CD4-positive, alpha-beta T cell (primary cell): ENCODE measurements at regions of chr12 and their contacts with region 1.

Region 1: DNA sequence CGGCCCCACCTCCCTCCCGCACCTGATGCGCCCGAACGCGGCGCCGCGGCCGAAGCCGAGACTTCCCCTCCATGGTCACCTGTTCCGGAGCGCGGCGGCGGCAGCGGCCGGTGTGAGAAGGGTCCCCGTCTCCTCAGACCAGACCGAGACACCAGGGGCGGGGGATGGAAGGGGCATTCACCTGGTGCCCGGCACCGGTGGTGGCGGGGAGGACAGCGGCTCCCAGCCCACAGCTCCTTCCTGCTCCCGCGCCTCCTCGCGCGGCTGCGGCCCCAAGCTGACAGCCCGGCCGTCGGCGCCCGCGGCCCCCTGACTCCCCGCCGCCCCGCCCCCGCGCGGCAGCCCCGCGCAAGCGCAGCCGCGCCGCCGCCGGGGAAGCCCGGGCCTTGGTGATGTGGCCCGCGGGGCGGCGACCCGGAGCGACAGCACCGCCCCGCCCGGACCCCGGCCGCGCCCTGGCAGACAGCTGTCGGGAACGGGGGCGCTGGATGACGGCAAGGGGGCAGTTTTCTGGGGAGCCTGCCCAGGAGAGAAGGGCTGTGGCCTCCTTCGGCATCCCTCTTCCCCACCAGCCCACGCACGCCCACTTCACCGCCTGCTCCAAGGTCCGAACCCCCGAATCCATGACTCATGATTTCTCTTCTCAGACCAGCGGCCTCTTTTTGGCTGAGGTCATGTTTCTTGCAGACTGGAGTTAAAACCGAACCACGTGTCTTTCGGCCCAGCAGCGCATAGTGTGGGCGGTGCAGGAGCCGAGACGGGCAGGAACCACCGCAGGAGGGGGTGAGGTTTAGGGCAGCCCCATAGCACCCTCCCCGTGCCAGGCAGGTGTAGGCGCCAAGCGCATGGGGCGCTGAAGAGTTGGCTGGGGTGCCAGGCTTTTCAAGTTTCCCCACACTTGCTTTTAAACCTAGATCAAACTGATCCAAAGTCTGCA is at the start of gene SLC41A2:
- DNase-seq: peak; percentile 53 to 93 (median 72)
- ATAC-seq: peak; percentile 95
- H3K4me3 ChIP-seq: peak within 1 kb of the TSS; percentile 63
- H3K4me3 Mint-ChIP-seq: peak within 1 kb of the TSS; percentile 99
- H3K27ac ChIP-seq: no peak within 1 kb of the TSS
- H3K27ac Mint-ChIP-seq: peak within 1 kb of the TSS; percentile 93
- H3K4me1 ChIP-seq: peaks cover 15% of the 10 kb centered on the region
- H3K4me1 Mint-ChIP-seq: peaks cover 26% of the 10 kb centered on the region
- H3K27me3 ChIP-seq: no peaks in the 10 kb centered on the region
- H3K27me3 Mint-ChIP-seq: peaks cover 7% of the 10 kb centered on the region
- CTCF ChIP-seq: peak; percentile 19
- total RNA-seq, gene SLC41A2: 1.2 to 1.7 TPM

Region 2: DNA sequence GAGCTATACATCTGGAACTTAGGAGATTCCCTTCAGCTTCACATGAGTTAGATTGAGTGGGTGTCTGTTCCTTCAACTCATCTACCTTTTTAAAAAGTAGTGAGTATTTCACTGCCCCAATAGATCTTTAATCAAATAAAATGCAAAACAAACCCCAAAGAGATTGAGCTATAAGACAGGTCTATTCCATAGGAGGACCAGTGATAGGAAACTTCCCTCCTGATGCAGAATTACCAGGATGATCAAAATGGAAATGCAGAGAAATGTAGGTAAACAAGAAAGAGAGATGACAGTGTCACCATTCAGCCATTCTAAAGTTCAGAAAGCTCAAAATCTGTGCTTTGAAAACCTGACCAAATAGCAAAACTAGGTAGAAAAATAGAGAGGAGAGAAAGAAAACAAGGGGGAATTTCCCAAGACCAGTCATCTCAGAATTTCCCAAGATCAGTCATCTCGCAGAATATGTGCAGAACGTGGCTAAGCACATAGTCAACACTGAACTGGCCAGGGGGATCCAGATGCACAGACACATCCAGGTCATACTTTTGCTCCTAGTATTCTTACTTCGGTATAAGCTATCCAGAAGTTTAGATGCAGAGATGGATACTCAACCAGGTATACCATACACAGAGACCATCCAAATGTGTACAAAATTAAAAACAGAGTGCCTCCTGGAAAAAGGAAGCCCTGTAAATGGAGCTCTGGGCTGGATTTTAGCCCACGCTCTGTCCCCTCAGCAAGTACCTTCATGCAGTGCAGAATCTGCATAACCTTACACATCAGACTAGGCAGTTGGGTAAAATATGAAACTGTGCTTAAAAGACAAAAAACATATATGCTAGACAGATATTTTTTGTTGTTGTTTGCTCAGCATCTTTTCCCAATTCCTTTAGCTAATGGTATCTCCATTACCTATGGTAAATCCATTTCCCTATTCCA is 27.6 kb before region 1 on chr12:
- CTCF ChIA-PET with region 1: no interaction called
- POLR2A ChIA-PET with region 1: no interaction called
- intact Hi-C with region 1: no loop called
- DNase-seq: peak in 2 of 14 experiments; percentile 27 to 36
- ATAC-seq: no peak
- H3K4me3 ChIP-seq: no peak overlapping the region
- H3K4me3 Mint-ChIP-seq: no peak overlapping the region
- H3K27ac ChIP-seq: no peak overlapping the region
- H3K27ac Mint-ChIP-seq: no peak overlapping the region
- H3K4me1 ChIP-seq: no peaks in the 10 kb centered on the region
- H3K4me1 Mint-ChIP-seq: no peaks in the 10 kb centered on the region
- H3K27me3 ChIP-seq: no peaks in the 10 kb centered on the region
- H3K27me3 Mint-ChIP-seq: no peaks in the 10 kb centered on the region
- CTCF ChIP-seq: no peak

Region 3: DNA sequence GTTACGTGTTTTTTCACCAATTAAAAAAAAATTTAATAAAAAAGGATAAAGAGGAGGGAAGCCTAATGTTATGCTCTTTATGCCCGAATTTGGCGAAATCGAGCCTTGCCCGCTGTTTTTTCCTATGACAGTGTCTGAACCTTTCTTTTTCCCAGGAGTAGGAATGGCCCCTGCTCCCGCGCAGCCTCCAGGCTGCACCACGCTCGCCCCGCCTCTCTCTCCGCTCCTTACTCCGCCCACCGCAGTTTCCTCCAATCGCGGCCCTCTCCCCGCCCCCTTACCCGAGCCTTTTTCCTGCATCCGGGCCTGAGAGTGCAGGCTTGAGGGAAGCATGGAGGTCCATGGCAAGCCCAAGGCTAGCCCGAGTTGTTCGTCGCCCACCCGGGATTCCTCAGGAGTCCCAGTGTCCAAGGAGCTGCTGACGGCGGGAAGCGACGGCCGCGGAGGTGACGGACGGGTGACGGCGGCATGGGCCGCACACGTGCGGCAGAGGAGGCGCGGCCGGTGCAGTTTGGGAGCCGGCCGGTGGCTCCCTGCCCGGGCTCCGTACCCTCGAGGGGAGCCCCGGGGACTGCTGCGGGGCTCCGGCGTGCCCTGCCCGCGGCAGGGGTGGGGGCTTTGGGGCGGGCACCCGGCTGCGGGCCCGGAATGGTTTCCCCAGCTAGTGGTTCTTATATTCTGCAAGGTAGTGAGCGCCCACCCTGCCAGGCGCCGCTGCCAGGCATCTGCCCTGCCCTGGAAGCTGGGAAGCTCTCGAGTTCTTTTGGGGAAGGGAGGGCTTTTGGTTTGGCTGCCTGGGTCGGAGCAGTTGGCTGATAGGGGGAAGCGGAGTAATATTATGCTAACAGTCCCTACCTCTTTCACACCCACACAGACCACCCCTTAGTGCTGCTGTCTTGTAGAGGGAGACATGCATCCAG is 28.0 kb after region 1 on chr12 and contains the start of gene NOPCHAP1:
- CTCF ChIA-PET with region 1: no interaction called
- POLR2A ChIA-PET with region 1: no interaction called
- intact Hi-C with region 1: loop called (anchors 1 to 2 kb)
- DNase-seq: peak; percentile 62 to 89 (median 80)
- ATAC-seq: peak; percentile 99
- H3K4me3 ChIP-seq: peak within 1 kb of the TSS; percentile 73
- H3K4me3 Mint-ChIP-seq: peak within 1 kb of the TSS; percentile 97
- H3K27ac ChIP-seq: no peak within 1 kb of the TSS
- H3K27ac Mint-ChIP-seq: peak within 1 kb of the TSS; percentile 68
- H3K4me1 ChIP-seq: peaks cover 21% of the 10 kb centered on the region
- H3K4me1 Mint-ChIP-seq: peaks cover 39% of the 10 kb centered on the region
- H3K27me3 ChIP-seq: no peaks in the 10 kb centered on the region
- H3K27me3 Mint-ChIP-seq: peaks cover 4% of the 10 kb centered on the region
- CTCF ChIP-seq: no peak
- total RNA-seq, gene NOPCHAP1: 10.1 to 11.8 TPM

Region 4: DNA sequence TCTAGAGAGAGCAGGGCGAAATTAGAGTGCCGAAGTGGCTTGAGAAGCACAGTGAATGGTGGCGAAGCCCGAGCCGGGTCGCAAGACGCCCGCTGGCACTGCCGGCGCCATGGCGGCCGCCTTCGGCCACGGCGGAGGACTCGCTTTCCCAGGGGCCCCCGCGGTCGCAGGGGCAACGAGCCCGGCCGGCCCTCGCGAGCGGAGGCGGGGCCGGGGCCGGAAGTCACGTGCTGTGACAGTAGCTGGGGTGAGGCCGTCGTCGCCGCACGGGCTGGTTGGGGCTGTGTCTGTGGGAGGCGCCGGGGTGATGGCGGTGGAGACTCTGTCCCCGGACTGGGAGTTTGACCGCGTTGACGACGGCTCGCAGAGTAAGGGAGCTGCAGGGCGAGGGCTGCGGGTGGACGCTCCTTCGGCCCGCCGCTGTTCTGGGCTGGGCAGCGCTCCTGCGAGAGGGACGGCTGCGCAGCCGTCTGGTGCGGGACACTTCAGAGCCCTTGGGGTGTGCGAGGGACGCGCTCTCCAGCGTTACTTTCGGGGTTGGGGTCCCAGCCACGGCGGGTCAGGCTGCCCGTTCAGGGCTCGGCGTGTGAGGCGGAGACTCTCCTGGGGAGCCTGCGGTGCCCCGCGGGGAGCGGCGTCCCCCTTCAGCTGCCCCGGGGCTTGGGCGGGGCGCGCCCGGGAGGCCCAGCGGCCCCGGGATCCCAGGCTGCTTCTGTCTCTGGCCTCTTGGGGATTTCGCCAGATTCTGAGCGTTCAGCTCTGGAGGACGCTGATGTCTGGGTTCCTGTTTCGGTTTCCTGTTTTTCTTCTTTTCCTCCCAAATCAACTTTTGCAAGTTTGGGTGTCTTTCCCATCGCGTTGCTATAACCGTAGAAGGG is 149.5 kb after region 1 on chr12 and contains the start of gene WASHC4:
- CTCF ChIA-PET with region 1: no interaction called
- POLR2A ChIA-PET with region 1: no interaction called
- intact Hi-C with region 1: no loop called
- DNase-seq: peak; percentile 87 to 96 (median 90)
- ATAC-seq: peak; percentile 95
- H3K4me3 ChIP-seq: peak within 1 kb of the TSS; percentile 93
- H3K4me3 Mint-ChIP-seq: peak within 1 kb of the TSS; percentile 98
- H3K27ac ChIP-seq: peak within 1 kb of the TSS; percentile 95 to 96
- H3K27ac Mint-ChIP-seq: peak within 1 kb of the TSS; percentile 89
- H3K4me1 ChIP-seq: peaks cover 13% of the 10 kb centered on the region
- H3K4me1 Mint-ChIP-seq: peaks cover 49% of the 10 kb centered on the region
- H3K27me3 ChIP-seq: peaks cover 4 to 9% of the 10 kb centered on the region in 2 experiments
- H3K27me3 Mint-ChIP-seq: peaks cover 30% of the 10 kb centered on the region
- CTCF ChIP-seq: no peak
- total RNA-seq, gene WASHC4: 32.5 to 33.6 TPM

Region 5: GRCh38 chr12:105420659-105421240 is 462.5 kb after region 1 on chr12:
- CTCF ChIA-PET with region 1: no interaction called
- POLR2A ChIA-PET with region 1: no interaction called
- intact Hi-C with region 1: no loop called
- DNase-seq: peak; percentile 26 to 71 (median 44)
- ATAC-seq: peak; percentile 55
- H3K4me3 ChIP-seq: no peak overlapping the region
- H3K4me3 Mint-ChIP-seq: no peak overlapping the region
- H3K27ac ChIP-seq: no peak overlapping the region
- H3K27ac Mint-ChIP-seq: no peak overlapping the region
- H3K4me1 ChIP-seq: no peaks in the 10 kb centered on the region
- H3K4me1 Mint-ChIP-seq: no peaks in the 10 kb centered on the region
- H3K27me3 ChIP-seq: no peaks in the 10 kb centered on the region
- H3K27me3 Mint-ChIP-seq: peaks cover under 1% of the 10 kb centered on the region
- CTCF ChIP-seq: peak; percentile 88